ENCODE measurements at regions of chr3 and their contacts with region 1.

Region 1: GRCh38 chr3:16600780-16601539 is 4.3 kb downstream of the DAZL start:
- DNase-seq: peak; percentile 84
- ATAC-seq: peak; percentile 64
- H3K4me3 Mint-ChIP-seq: no peak overlapping the region
- H3K27ac Mint-ChIP-seq: no peak overlapping the region
- H3K4me1 Mint-ChIP-seq: peaks cover 25% of the 10 kb centered on the region
- H3K27me3 Mint-ChIP-seq: peaks cover 61% of the 10 kb centered on the region

Region 2: DNA sequence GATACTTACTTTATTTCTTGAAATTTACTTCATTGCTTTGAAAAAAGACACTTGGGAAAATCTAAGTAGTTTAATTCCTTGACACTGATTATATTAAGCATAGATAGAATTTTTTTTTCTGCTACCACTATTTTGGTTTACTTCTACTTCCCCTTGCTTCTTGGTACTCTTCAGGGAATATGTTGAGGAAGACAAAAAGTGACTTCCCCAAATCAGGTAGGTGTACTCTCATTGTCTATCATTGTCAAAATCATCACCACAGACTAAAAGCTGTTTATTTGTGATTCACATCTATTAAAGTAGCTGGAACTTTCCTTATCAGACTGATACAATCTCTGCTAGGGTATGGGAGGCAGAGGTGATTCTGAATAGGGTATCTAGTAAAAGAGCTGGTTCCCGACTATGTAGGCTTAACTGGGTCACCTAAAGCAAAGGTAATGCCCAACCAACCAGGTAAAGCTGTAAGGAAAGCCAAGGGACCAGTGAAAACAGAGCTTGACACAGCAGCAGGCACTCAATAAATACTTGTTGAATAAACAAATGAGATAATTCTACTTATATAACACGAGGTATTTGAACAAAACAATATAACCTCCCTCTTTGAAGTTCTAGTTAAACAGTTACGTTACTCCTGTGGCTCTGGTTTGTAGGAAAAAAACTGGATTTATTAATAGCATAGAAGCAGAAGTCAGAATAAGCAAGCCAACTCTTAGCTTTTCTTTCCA is 630.7 kb after region 1 on chr3:
- CTCF ChIA-PET with region 1: interaction called, 15 read pairs
- DNase-seq: no peak
- ATAC-seq: no peak
- H3K4me3 Mint-ChIP-seq: no peak overlapping the region
- H3K27ac Mint-ChIP-seq: no peak overlapping the region
- H3K4me1 Mint-ChIP-seq: peaks cover 20% of the 10 kb centered on the region
- H3K27me3 Mint-ChIP-seq: no peaks in the 10 kb centered on the region

Measured in activated CD8-positive, alpha-beta memory T cell treated with anti-CD3 and anti-CD28 coated beads, Interleukin-2, amount 10 ng/mL, durations not matched to agents 7 days and 5 days (primary cell).